ENCODE measurements at regions of chr17 and their contacts with region 1.

Region 1: DNA sequence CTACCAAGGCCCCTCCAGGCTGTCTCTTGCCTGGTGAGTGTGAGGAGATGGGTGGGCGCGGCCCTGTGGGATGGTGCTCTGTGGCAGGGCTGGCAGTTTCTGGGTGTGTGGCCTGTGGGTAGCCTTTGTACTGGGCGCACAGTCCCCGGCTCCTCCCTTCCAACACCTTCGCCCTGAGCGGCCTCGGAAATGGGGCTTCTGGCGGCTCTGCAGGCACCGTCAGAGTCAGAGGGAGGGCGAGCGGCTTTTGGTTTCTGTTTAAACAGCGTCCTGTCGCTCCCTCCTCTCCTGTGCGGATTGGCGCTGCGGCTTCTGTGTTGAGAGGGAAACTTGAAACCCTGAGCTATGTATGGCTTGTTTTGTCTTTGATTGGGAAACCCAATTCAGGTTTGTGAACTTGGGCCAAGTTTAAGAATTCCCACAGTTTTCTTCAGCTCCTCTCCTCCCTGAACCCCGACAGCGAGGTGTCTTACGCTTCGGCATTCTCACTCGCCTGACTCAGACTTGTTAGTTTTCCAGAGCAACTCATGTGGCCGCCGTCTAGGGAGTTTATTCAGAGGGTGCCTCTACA is 8.3 kb upstream of the ZNF750 start:
- DNase-seq: peak in 1 of 2 donors; percentile 50
- ATAC-seq: peak in 4 of 8 donors; percentile 7 to 27 (median 22)
- H3K4me3 ChIP-seq: peak overlapping the region in 6 of 10 donors; percentile 23 to 58 (median 38)
- H3K27ac ChIP-seq: peak overlapping the region; percentile 20 to 89 (median 70)
- H3K4me1 ChIP-seq: peaks cover 0 to 34% (median 12%) of the 10 kb centered on the region in 9 donors
- H3K27me3 ChIP-seq: no peaks in the 10 kb centered on the region
- CTCF ChIP-seq: no peak

Region 2: DNA sequence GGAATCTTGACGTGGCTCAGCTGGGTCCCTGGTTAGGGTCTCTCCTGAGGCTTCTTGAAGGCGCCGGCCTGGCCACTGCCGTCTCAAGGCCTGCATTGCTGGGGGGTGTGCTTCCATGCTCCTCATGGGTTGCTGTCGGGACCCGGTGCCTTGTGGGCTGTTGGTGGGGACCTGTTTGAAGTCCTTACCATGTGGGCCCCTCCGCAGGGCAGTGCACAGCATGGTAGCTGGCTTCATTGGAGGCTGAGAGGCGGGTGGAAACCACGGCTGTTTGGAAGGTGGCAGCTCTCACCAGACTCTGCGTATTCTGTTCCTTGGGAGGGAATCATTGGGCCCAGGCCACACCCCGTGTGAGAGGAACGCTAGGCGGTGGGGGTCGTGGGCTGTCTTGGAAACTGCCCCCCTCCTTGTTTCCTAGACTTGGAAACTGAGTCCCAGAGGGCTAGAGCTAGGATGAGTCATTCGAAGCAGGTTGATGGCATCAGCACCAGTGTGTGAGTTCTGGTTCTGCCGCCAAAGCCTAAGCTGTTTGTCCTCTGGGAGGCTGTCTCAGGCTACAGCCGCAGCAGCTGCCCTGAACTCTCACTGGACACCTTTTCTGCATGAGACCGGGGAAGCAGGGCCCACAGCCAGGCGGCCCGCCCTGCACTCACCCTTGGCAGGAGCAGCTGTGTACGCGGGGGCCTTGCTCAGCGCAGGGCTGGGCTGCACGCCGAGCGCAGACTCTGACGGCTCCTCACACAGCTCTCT is 43.5 kb before region 1 on chr17:
- intact Hi-C with region 1: loop called in 2 of 10 experiments (anchors 2 to 5 kb)
- DNase-seq: peak; percentile 76 to 84
- ATAC-seq: peak; percentile 88 to 92 (median 90)
- H3K4me3 ChIP-seq: no peak overlapping the region
- H3K27ac ChIP-seq: peak overlapping the region; percentile 24 to 78 (median 71)
- H3K4me1 ChIP-seq: peaks cover 13 to 57% (median 34%) of the 10 kb centered on the region in 9 donors
- H3K27me3 ChIP-seq: no peaks in the 10 kb centered on the region
- CTCF ChIP-seq: peak in 2 of 9 donors; percentile 14 to 19

Region 3: GRCh38 chr17:82830249-82830661 is 17.9 kb before region 1 on chr17:
- intact Hi-C with region 1: loop called in 1 of 10 experiments (anchors 1 kb)
- DNase-seq: peak; percentile 81 to 90
- ATAC-seq: peak; percentile 87 to 92 (median 88)
- H3K4me3 ChIP-seq: peak overlapping the region in 9 of 10 donors; percentile 35 to 47 (median 39)
- H3K27ac ChIP-seq: peak overlapping the region; percentile 50 to 80 (median 64)
- H3K4me1 ChIP-seq: peaks cover 0 to 26% (median 11%) of the 10 kb centered on the region in 9 donors
- H3K27me3 ChIP-seq: no peaks in the 10 kb centered on the region
- CTCF ChIP-seq: no peak

Region 4: DNA sequence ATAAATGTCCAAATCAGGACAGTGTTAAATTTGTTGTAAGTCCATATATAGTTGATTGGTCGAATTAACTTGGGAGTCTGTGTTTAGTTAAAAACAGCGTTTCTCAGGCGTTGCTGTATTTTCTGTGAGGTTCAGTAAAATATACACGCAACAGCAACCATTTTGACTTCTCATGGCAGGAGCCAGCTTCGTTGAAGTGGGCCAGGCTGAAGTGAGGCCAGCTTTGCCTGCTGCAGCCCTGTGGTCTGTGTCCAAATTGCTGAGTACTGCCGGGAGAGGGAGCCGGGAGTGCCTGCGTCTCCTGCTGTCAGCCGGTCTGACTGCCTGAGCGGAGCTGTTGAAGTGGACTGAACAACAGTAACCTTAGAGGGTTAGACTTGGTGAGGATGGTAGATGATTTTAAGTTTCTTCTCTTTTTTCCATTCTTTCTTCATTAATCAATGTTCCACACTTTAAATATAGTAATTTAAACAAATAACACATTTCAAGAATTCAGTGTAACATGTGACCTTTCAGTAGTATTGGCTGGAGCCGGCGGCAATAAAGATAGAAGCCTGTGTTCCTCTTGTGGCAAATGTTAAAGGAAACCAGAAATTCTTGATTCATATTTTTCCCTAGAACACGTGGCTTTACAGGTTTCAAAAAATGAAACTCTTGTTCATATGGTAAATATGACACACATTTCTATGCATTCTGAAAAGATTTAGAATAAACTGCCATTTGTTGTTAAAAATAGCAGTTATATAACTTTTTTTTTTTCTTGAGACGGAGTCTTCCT is 28.7 kb after region 1 on chr17:
- intact Hi-C with region 1: loop called in 1 of 10 experiments (anchors 2 kb)
- DNase-seq: peak; percentile 77 to 82
- ATAC-seq: peak; percentile 89 to 96 (median 95)
- H3K4me3 ChIP-seq: no peak overlapping the region
- H3K27ac ChIP-seq: peak overlapping the region; percentile 21 to 77 (median 62)
- H3K4me1 ChIP-seq: peaks cover 14 to 79% (median 44%) of the 10 kb centered on the region in 9 donors
- H3K27me3 ChIP-seq: no peaks in the 10 kb centered on the region
- CTCF ChIP-seq: peak; percentile 13 to 75 (median 54)

Region 5: DNA sequence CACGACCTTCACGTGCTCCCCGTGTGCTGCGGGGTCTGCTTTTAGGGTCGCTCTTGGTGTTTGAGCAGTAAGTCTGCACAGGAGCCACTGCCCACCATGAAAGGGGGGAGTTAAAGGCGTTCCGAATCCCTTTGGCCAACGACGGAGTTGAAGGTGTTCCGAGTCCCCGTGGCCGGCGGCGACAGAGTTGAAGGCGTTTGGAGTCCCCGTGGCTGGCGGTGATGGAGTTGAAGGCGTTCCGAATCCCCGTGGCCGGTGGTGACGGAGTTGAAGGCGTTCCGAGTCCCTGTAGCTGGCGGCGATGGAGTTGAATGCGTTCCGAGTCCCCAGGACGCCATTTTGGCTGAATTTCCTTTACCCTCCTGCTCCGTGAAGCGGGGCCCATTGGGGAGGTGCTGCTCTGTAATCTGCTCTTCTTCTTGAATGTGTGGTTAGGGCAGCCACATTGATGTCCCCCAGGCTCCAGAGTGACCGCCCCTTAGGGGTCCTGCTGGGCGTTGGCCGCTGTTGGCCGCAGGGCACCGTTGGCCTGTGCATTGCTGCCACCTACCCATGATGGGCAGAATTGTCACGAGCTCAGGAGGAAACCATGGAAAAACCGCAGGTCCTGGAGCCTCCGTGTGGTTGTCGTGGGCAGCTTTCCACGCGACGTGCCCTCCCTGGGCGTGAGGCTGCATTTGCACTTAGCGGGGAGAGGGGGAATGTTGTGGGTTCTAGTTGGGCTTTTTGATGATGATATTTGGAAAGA is 65.4 kb after region 1 on chr17:
- intact Hi-C with region 1: no loop called
- DNase-seq: no peak
- ATAC-seq: peak in 6 of 8 donors; percentile 11 to 31 (median 18)
- H3K4me3 ChIP-seq: no peak overlapping the region
- H3K27ac ChIP-seq: no peak overlapping the region
- H3K4me1 ChIP-seq: peaks cover 0 to 33% (median 10%) of the 10 kb centered on the region in 9 donors
- H3K27me3 ChIP-seq: no peaks in the 10 kb centered on the region
- CTCF ChIP-seq: peak in 7 of 9 donors; percentile 23 to 44 (median 35)